ENCODE measurements at regions of chr22 and their contacts with region 1.

Region 1: DNA sequence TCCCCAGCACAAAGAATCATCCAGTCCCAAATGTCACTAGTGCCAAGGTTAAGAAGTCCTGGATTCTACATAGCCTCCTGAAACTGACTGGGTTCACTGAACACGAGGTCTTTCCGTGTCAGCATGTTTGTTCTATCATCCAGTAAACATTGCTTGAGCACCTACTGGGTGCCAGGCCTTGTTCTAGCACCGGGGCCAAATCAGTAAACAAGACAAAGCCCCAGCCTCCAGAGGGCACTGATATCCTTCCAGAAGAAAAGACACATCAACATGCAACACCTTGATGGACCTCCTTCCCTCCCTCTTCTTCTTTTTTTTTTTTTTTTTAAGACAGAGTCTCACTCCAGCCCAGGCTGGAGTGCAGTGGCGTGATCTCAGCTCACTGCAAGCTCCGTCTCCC is 26.9 kb downstream of the TPST2 start:
- DNase-seq: peak in 1 of 2 donors; percentile 38
- ATAC-seq: peak in 1 of 2 donors; percentile 46
- H3K4me3 ChIP-seq: no peak overlapping the region
- H3K27ac ChIP-seq: peak overlapping the region; percentile 84 to 92 (median 88)
- H3K4me1 ChIP-seq: peaks cover 50 to 52% of the 10 kb centered on the region in 2 donors
- H3K27me3 ChIP-seq: no peaks in the 10 kb centered on the region
- CTCF ChIP-seq: peak in 1 of 5 experiments; percentile 13
- POLR2A ChIP-seq: no peak

Region 2: DNA sequence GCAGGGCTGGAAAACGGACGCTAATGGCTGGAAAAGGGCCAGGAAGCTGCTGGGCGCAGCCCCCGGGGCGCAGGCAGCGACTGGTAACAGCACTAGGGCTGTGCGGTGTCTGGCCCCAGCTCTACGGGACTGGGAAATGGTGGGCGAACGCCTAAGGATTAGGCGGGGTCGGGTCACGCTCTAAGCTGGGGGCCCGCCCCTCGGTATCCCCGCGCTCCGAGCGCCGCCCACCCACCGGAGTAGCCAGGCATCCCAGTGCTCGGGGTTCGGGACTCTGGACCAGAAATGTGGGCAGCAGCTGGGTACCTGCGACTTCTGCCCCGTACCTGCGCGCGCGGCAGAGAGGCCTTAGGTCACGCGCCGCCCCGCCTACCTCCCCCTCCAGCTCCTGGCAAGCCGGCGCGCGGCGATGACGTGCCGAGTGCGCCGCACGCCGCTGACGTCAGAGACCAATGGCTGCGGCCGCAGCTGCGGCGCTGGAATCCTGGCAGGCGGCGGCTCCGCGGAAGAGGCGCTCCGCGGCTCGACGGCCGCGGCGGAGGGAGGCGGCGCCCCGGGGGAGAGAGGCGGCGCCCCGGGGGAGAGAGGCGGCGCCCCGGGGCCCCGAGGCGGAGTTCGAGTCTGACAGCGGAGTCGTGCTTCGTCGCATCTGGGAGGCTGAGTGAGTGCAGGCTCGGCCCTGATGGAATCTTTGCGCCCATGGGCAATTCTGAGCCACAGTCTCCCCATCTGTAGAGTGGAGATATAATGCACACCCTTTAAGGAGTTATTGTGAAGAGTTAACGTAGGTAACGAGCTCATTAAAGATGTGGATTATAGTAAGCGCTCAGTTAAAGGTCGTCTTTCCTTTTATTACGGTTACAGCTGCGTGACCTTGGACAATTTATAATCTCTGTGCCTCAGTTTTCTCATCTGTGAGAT is 79.3 kb before region 1 on chr22 and contains the starts of genes HPS4 and SRRD:
- in situ Hi-C with region 1: no loop called
- intact Hi-C with region 1: loop called (anchors 5 kb)
- DNase-seq: peak; percentile 75 to 86
- ATAC-seq: peak; percentile 80 to 90
- H3K4me3 ChIP-seq: peak within 1 kb of the TSS; percentile 76 to 99 (median 86)
- H3K27ac ChIP-seq: peak within 1 kb of the TSS; percentile 93 to 100 (median 94)
- H3K4me1 ChIP-seq: peaks cover 54 to 60% of the 10 kb centered on the region in 2 donors
- H3K27me3 ChIP-seq: no peaks in the 10 kb centered on the region
- CTCF ChIP-seq: peak in 1 of 5 experiments; percentile 29
- POLR2A ChIP-seq: peak; percentile 95
- total RNA-seq, gene HPS4: 7.0 to 13.9 (median 10.5) TPM
- total RNA-seq, gene SRRD: 24.0 to 53.1 (median 27.4) TPM

Region 3: DNA sequence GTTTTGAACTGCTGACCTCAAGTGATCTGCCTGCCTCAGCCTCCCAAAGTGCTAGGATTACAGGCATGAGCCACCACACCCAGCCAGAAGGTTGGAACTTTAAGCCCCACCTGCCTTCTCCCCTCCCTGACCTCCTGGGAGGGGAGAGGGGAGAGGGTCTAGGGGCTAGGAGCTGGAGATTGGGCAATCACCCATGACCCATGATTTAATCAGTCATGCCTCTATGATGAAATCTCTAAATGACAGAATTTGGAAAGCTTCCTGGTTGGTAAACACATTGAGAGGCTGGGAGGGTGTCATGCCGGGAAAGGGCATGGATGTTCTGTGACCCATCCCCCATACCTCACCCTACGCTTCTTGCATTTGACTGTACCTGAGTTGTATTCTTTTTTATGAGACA is 33.7 kb before region 1 on chr22:
- in situ Hi-C with region 1: no loop called
- intact Hi-C with region 1: loop called (anchors 1 kb)
- DNase-seq: peak; percentile 65 to 79
- ATAC-seq: peak; percentile 69
- H3K4me3 ChIP-seq: no peak overlapping the region
- H3K27ac ChIP-seq: peak overlapping the region; percentile 91 to 98 (median 94)
- H3K4me1 ChIP-seq: peaks cover 59 to 60% of the 10 kb centered on the region in 2 donors
- H3K27me3 ChIP-seq: no peaks in the 10 kb centered on the region
- CTCF ChIP-seq: no peak
- POLR2A ChIP-seq: no peak